T-cell (primary cell): ENCODE measurements at regions of chr1 and their contacts with region 1.

Region 1: DNA sequence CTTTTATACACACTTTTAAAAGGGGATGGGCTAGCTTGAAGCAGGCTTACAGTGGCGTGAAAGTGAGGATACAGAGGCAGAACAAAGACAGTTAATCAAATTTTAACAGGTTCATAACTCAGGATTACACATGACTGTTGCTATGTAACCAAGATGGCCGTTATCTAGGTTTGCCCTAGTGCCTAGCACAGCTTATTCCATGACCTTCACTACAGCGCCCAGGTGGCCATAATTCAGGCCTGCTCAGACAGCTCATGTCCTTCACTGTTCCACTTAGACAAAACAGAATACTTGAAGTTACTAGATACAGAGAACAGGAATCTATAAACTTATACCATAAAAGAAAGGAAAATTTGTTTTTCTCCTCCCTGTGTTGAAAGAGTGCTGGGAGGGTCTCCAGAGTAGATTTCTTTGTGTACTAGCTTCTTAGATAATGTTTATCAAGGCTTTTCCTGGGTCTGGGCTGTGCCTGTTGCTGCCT is 6.2 kb upstream of the SPRR2F start:
- DNase-seq: no peak
- ATAC-seq: no peak
- H3K4me3 ChIP-seq: no peak overlapping the region
- H3K4me3 Mint-ChIP-seq: no peak overlapping the region
- H3K27ac ChIP-seq: no peak overlapping the region
- H3K27ac Mint-ChIP-seq: no peak overlapping the region
- H3K4me1 ChIP-seq: no peaks in the 10 kb centered on the region
- H3K4me1 Mint-ChIP-seq: no peaks in the 10 kb centered on the region
- H3K27me3 ChIP-seq: peaks cover 2 to 8% of the 10 kb centered on the region in 2 experiments
- H3K27me3 Mint-ChIP-seq: peaks cover 28 to 38% of the 10 kb centered on the region in 2 donors

Region 2: GRCh38 chr1:153025797-153026196 is 93.7 kb before region 1 on chr1:
- CTCF ChIA-PET with region 1: no interaction called
- POLR2A ChIA-PET with region 1: no interaction called
- DNase-seq: no peak
- ATAC-seq: no peak
- H3K4me3 ChIP-seq: no peak overlapping the region
- H3K4me3 Mint-ChIP-seq: no peak overlapping the region
- H3K27ac ChIP-seq: no peak overlapping the region
- H3K27ac Mint-ChIP-seq: no peak overlapping the region
- H3K4me1 ChIP-seq: no peaks in the 10 kb centered on the region
- H3K4me1 Mint-ChIP-seq: no peaks in the 10 kb centered on the region
- H3K27me3 ChIP-seq: peaks cover 2 to 3% of the 10 kb centered on the region in 2 experiments
- H3K27me3 Mint-ChIP-seq: peaks cover 31 to 41% of the 10 kb centered on the region in 2 donors

Region 3: GRCh38 chr1:153141377-153141776 is 21.8 kb after region 1 on chr1:
- CTCF ChIA-PET with region 1: interaction called in 1 of 2 experiments, 11 read pairs
- POLR2A ChIA-PET with region 1: no interaction called
- DNase-seq: no peak
- ATAC-seq: no peak
- H3K4me3 ChIP-seq: no peak overlapping the region
- H3K4me3 Mint-ChIP-seq: no peak overlapping the region
- H3K27ac ChIP-seq: no peak overlapping the region
- H3K27ac Mint-ChIP-seq: no peak overlapping the region
- H3K4me1 ChIP-seq: no peaks in the 10 kb centered on the region
- H3K4me1 Mint-ChIP-seq: no peaks in the 10 kb centered on the region
- H3K27me3 ChIP-seq: peaks cover 2% of the 10 kb centered on the region in 2 experiments
- H3K27me3 Mint-ChIP-seq: peaks cover 41 to 42% of the 10 kb centered on the region in 2 donors

Region 4: GRCh38 chr1:153336650-153337049 is 217.1 kb after region 1 on chr1:
- CTCF ChIA-PET with region 1: no interaction called
- POLR2A ChIA-PET with region 1: no interaction called
- DNase-seq: no peak
- ATAC-seq: no peak
- H3K4me3 ChIP-seq: no peak overlapping the region
- H3K4me3 Mint-ChIP-seq: no peak overlapping the region
- H3K27ac ChIP-seq: no peak overlapping the region
- H3K27ac Mint-ChIP-seq: no peak overlapping the region
- H3K4me1 ChIP-seq: peaks cover 9 to 12% of the 10 kb centered on the region in 2 experiments
- H3K4me1 Mint-ChIP-seq: peaks cover 25 to 29% (median 25%) of the 10 kb centered on the region in 3 donors
- H3K27me3 ChIP-seq: peaks cover 0 to 8% of the 10 kb centered on the region in 2 experiments
- H3K27me3 Mint-ChIP-seq: peaks cover 3 to 13% of the 10 kb centered on the region in 2 donors

Region 5: GRCh38 chr1:153352523-153352922 is 233.0 kb after region 1 on chr1:
- CTCF ChIA-PET with region 1: no interaction called
- POLR2A ChIA-PET with region 1: no interaction called
- DNase-seq: peak in 33 of 35 experiments; percentile 11 to 77 (median 50)
- ATAC-seq: peak; percentile 63 to 70 (median 66)
- H3K4me3 ChIP-seq: no peak overlapping the region
- H3K4me3 Mint-ChIP-seq: no peak overlapping the region
- H3K27ac ChIP-seq: no peak overlapping the region
- H3K27ac Mint-ChIP-seq: no peak overlapping the region
- H3K4me1 ChIP-seq: peaks cover 3 to 10% of the 10 kb centered on the region in 2 experiments
- H3K4me1 Mint-ChIP-seq: peaks cover 11 to 21% (median 13%) of the 10 kb centered on the region in 3 donors
- H3K27me3 ChIP-seq: peaks cover 0 to 43% of the 10 kb centered on the region in 2 experiments
- H3K27me3 Mint-ChIP-seq: peaks cover 7 to 27% of the 10 kb centered on the region in 2 donors